ENCODE measurements at regions of chr11 and their contacts with region 1.

Region 1: GRCh38 chr11:124644426-124645280 is 22.0 kb downstream of the TBRG1 start:
- DNase-seq: peak; percentile 28
- H3K4me3 ChIP-seq: peak overlapping the region; percentile 36
- CTCF ChIP-seq: peak; percentile 68

Region 2: GRCh38 chr11:124656774-124657630 is 12.3 kb after region 1 on chr11:
- CTCF ChIA-PET with region 1: interaction called, 35 read pairs
- POLR2A ChIA-PET with region 1: interaction called, 3 read pairs
- DNase-seq: no peak
- H3K4me3 ChIP-seq: no peak overlapping the region
- CTCF ChIP-seq: no peak

Region 3: GRCh38 chr11:124758317-124759203 is 113.9 kb after region 1 on chr11:
- CTCF ChIA-PET with region 1: interaction called, 35 read pairs
- POLR2A ChIA-PET with region 1: no interaction called
- DNase-seq: no peak
- H3K4me3 ChIP-seq: peak overlapping the region; percentile 39
- CTCF ChIP-seq: peak; percentile 88

Region 4: DNA sequence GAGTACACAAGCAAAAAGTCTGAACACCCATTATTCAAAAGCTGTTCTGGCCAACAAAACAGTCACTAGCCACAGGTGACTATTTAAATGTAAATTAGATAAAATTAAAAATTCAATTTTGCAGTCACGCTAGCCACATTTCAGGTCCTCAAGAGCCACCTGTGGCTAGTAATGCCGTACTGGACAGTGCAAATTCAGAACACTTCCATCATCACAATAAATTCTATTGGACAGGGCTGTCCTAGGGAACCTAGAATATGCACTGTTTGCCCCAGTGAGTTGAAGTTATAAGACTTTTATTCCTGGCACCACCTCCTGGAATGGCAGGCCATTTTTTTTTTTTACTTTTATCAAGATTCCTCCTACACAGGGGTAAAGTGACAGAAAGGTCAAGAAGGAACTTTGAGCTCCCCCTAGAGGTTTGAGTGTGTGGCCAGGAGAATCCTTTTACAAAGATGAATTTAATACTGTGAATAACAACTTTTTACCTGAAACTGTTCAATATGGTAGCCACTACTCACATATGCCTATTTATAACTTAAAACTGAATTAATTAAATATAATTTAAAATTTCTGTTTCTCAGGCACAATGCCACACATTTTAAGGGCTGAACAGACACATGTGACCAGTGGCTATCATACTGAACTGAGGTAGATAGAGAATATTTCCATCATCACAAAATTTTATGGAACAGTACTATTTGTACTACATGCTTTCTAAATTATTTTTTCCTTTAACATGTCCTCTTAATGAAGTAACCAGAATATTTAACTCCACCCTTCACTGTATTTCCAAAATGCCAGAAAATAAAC is 149.0 kb after region 1 on chr11:
- CTCF ChIA-PET with region 1: interaction called, 26 read pairs
- POLR2A ChIA-PET with region 1: no interaction called
- DNase-seq: no peak
- H3K4me3 ChIP-seq: no peak overlapping the region
- CTCF ChIP-seq: peak; percentile 56

Region 5: GRCh38 chr11:124865921-124866583 is 221.4 kb after region 1 on chr11:
- CTCF ChIA-PET with region 1: interaction called, 34 read pairs
- POLR2A ChIA-PET with region 1: no interaction called
- DNase-seq: no peak
- H3K4me3 ChIP-seq: peak overlapping the region; percentile 38
- CTCF ChIP-seq: peak; percentile 86